HEK293 (cell line): ENCODE measurements at regions of chr17 and their contacts with region 1.

Region 1: GRCh38 chr17:38584350-38584925 is 21.3 kb downstream of the SRCIN1 start:
- H3K4me3 ChIP-seq: peak overlapping the region; percentile 21
- H3K27ac ChIP-seq: no peak overlapping the region
- H3K4me1 ChIP-seq: peaks cover 16% of the 10 kb centered on the region
- CTCF ChIP-seq: peak; percentile 86

Region 2: GRCh38 chr17:38498186-38498752 is 86.2 kb before region 1 on chr17:
- CTCF ChIA-PET with region 1: interaction called, 15 read pairs
- POLR2A ChIA-PET with region 1: no interaction called
- H3K4me3 ChIP-seq: no peak overlapping the region
- H3K27ac ChIP-seq: no peak overlapping the region
- H3K4me1 ChIP-seq: no peaks in the 10 kb centered on the region
- CTCF ChIP-seq: no peak

Region 3: GRCh38 chr17:38539386-38539785 is 45.1 kb before region 1 on chr17:
- CTCF ChIA-PET with region 1: interaction called, 10 read pairs
- POLR2A ChIA-PET with region 1: no interaction called
- H3K4me3 ChIP-seq: no peak overlapping the region
- H3K27ac ChIP-seq: no peak overlapping the region
- H3K4me1 ChIP-seq: no peaks in the 10 kb centered on the region
- CTCF ChIP-seq: no peak

Region 4: DNA sequence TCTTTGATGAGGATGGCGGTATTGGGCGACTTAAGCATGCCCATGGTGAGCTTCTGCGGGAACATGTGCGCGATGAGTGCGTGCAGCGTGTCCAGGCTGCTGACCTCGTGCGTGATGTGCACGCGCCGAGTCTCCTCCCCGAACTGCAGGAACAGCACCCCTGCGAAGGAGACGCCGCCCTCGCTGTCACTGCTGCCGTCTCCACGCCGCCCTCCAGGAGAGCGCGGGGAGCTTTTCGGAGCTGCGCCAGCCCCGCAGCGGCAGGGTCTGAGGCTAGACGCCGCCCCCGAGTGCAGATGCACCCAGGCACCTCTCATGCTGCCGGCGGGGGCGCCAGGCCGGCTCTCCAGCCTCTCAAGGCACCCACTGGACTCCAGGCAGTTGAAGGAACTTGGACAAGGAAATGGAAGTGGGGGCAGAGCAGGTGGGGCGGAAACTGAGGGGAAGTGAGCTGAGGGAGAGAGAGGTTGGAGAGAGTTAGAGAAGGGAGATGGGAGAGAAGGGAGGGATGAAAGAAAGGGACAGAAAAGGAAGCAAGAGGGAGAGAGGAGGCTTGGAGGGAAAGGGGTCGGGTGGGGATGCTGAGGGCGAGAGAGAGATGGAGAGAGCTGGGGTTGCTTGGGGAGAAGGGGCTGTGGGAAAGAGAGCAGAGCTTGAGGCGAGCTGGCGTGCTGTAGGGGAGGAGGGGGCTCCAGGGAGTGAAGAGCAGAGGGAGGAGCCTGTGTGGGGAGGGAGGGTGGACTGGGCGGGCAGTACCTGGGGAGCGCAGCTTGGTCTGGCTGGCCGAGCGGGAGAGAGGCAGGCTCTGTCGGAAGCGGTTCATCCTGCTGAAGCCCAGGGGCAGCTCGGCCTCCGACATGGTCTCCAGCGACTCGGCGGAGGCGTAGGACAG is 20.8 kb before region 1 on chr17:
- CTCF ChIA-PET with region 1: interaction called, 264 read pairs
- POLR2A ChIA-PET with region 1: interaction called, 14 read pairs
- H3K4me3 ChIP-seq: no peak overlapping the region
- H3K27ac ChIP-seq: no peak overlapping the region
- H3K4me1 ChIP-seq: peaks cover 11% of the 10 kb centered on the region
- CTCF ChIP-seq: no peak

Region 5: GRCh38 chr17:38605888-38606645 is 21.6 kb after region 1 on chr17 and contains the start of gene SRCIN1:
- CTCF ChIA-PET with region 1: interaction called, 188 read pairs
- POLR2A ChIA-PET with region 1: interaction called, 6 read pairs
- H3K4me3 ChIP-seq: peak within 1 kb of the TSS; percentile 60
- H3K27ac ChIP-seq: peak within 1 kb of the TSS; percentile 46; the same call in 1 of the 2 replicates
- H3K4me1 ChIP-seq: peaks cover 15% of the 10 kb centered on the region
- CTCF ChIP-seq: peak; percentile 98

Region 6: GRCh38 chr17:38660097-38661025 is 75.9 kb after region 1 on chr17:
- CTCF ChIA-PET with region 1: interaction called, 128 read pairs
- POLR2A ChIA-PET with region 1: no interaction called
- H3K4me3 ChIP-seq: no peak overlapping the region
- H3K27ac ChIP-seq: no peak overlapping the region
- H3K4me1 ChIP-seq: no peaks in the 10 kb centered on the region
- CTCF ChIP-seq: no peak